CD4-positive, alpha-beta memory T cell (primary cell): ENCODE measurements at regions of chr2 and their contacts with region 1.

Region 1: GRCh38 chr2:235595422-235596010 is 101.7 kb downstream of the AGAP1 start:
- DNase-seq: peak in 4 of 5 donors; percentile 14 to 28 (median 22)
- H3K4me3 ChIP-seq: no peak overlapping the region
- H3K4me3 Mint-ChIP-seq: no peak overlapping the region
- H3K27ac ChIP-seq: no peak overlapping the region
- H3K27ac Mint-ChIP-seq: no peak overlapping the region
- H3K4me1 ChIP-seq: no peaks in the 10 kb centered on the region
- H3K4me1 Mint-ChIP-seq: peaks cover 0 to 1% (median 0%) of the 10 kb centered on the region in 4 donors
- H3K27me3 ChIP-seq: no peaks in the 10 kb centered on the region
- H3K27me3 Mint-ChIP-seq: peaks cover 2 to 3% of the 10 kb centered on the region in 2 donors

Region 2: DNA sequence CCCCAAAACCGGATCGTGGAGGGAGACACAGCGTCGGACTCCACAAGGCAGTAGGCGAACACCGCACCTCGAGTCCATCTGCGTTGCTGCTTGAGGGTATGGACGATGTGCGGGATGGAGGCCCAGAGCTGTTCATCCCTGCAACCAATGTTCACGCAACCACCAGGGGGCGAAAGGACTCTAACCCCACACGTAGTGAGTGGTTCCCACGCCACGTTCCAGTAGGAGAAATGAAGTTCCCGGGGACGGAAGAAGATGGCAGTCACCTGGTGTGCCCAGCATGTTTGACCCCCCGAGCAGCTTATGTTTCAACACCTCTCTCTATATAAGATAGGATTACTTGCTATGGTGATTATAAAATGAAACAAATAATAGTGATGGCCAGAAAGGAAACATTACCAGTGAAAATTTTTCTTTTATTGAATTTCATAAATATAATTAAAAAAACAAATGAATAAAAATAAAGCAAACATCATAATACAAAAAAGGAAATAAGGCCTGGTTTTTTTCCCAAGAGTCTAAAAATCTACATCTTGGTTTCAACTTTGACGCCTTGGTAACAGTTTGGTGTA is 459.4 kb before region 1 on chr2:
- CTCF ChIA-PET with region 1: interaction called, 18 read pairs
- POLR2A ChIA-PET with region 1: no interaction called
- intact Hi-C with region 1: no loop called
- DNase-seq: peak in 4 of 5 donors; percentile 7 to 28 (median 10)
- H3K4me3 ChIP-seq: no peak overlapping the region
- H3K4me3 Mint-ChIP-seq: no peak overlapping the region
- H3K27ac ChIP-seq: no peak overlapping the region
- H3K27ac Mint-ChIP-seq: no peak overlapping the region
- H3K4me1 ChIP-seq: peaks cover 3% of the 10 kb centered on the region
- H3K4me1 Mint-ChIP-seq: no peaks in the 10 kb centered on the region
- H3K27me3 ChIP-seq: peaks cover 11% of the 10 kb centered on the region
- H3K27me3 Mint-ChIP-seq: peaks cover 10 to 11% of the 10 kb centered on the region in 2 donors

Region 3: DNA sequence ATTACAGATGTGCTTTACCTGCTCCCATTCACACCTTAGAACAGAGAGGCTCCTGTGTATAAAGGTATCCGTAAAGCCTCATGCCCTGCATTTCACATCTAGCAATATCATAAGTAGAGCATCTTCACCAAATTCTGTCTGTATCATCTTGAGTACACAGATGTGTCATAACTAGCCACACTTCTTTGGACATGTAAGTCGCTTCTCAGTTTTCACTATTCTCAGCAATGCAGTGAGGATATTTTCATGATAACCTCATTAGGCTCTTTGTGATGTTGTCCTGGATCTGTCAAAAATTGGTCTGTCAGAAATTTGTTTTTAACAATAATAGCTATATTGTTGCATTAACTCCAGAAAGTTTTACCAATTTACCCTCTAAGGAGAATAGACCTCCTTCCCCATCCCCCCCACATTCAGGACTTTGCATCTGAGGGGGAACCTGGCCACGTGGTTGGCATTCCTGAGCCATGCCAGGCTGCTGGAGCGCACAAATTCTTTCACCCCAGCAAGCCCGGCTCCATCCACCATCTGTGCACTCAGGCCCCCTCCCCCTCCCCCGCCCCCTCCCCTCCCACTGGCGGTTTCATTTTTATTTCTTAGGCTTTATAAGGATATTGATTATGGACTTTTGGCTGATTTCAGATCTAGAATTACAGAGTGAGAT is 67.6 kb before region 1 on chr2:
- CTCF ChIA-PET with region 1: no interaction called
- POLR2A ChIA-PET with region 1: no interaction called
- intact Hi-C with region 1: no loop called
- DNase-seq: no peak
- H3K4me3 ChIP-seq: no peak overlapping the region
- H3K4me3 Mint-ChIP-seq: no peak overlapping the region
- H3K27ac ChIP-seq: no peak overlapping the region
- H3K27ac Mint-ChIP-seq: no peak overlapping the region
- H3K4me1 ChIP-seq: no peaks in the 10 kb centered on the region
- H3K4me1 Mint-ChIP-seq: no peaks in the 10 kb centered on the region
- H3K27me3 ChIP-seq: no peaks in the 10 kb centered on the region
- H3K27me3 Mint-ChIP-seq: peaks cover 0 to 2% of the 10 kb centered on the region in 2 donors

Region 4: GRCh38 chr2:236054125-236054524 is 458.6 kb after region 1 on chr2:
- CTCF ChIA-PET with region 1: no interaction called
- POLR2A ChIA-PET with region 1: no interaction called
- intact Hi-C with region 1: no loop called
- DNase-seq: no peak
- H3K4me3 ChIP-seq: no peak overlapping the region
- H3K4me3 Mint-ChIP-seq: no peak overlapping the region
- H3K27ac ChIP-seq: no peak overlapping the region
- H3K27ac Mint-ChIP-seq: no peak overlapping the region
- H3K4me1 ChIP-seq: peaks cover 6% of the 10 kb centered on the region
- H3K4me1 Mint-ChIP-seq: peaks cover 7 to 10% (median 8%) of the 10 kb centered on the region in 4 donors
- H3K27me3 ChIP-seq: no peaks in the 10 kb centered on the region
- H3K27me3 Mint-ChIP-seq: peaks cover 23% of the 10 kb centered on the region in 2 donors